HEK293 (cell line): ENCODE measurements at regions of chr17 and their contacts with region 1.

Region 1: DNA sequence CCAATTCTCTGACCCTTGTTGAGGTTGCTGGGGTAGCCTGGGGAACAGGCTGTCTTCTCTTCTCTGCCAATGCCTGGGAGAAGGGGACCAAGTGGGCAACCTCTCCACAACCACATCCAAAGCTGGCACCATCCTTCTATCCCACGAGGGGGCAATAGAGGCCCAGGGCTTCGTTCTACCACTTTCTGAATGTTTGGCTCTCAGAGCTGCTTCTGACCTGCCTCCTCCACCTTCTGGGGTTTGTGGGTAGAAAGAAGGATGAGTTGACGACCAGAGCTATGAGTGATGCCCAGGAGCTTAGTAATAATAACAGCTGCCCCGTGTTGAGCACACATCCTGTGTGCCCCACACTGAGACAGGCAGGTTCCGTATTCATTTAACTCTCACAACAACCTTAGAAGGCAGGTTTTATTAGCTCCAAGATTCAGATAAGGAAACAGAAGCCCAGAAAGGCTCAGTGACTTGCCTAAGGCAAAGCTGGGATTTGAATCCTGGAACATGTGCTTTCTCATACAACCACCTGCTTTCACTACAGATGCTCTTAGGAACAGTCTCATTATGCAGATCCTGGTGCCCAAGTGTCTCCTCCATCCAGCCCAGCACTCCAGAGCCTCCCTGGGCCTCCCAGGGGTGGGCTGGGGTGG is 11.1 kb downstream of the TSPOAP1 start:
- H3K4me3 ChIP-seq: no peak overlapping the region
- H3K27ac ChIP-seq: peak overlapping the region; percentile 43; the same call in 1 of the 2 replicates
- H3K4me1 ChIP-seq: peaks cover 9% of the 10 kb centered on the region
- CTCF ChIP-seq: peak; percentile 81

Region 2: DNA sequence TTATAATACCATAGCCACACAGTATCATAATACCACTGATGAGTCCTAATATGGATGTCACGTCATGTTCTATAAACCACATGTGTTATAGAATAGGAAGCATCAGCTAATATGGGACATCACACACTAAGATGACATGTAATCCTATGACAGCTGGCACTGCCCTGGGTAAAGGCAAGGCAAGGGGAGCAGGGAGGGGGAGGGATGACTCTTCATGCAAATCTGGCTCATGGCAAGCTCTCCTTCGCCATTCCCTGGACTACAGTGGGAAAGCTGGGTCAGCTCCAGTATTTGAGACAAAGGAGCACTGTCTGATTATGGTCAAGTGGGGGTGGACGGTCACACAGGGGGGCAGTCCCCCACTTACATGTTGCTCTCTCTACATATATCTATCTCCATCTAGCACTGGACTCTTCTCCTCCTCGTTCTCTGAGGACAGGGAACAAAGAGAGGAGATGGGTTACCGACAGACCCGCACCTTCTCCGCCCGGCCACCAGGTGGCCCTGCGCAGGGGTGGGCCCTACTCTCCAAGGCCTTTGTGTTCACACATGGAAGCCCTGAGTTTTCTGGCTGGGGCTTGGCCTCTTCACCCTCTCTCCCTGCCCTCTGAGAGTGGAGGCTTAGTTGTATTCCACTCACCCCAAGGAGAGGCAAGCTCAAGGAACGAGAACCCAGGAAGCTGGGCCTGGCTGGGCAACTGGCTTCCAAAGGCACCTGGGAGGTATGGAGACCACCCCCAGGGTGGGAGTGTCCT is 13.4 kb before region 1 on chr17:
- CTCF ChIA-PET with region 1: interaction called, 38 read pairs
- POLR2A ChIA-PET with region 1: interaction called, 3 read pairs
- H3K4me3 ChIP-seq: no peak overlapping the region
- H3K27ac ChIP-seq: no peak overlapping the region
- H3K4me1 ChIP-seq: no peaks in the 10 kb centered on the region
- CTCF ChIP-seq: peak; percentile 69

Region 3: DNA sequence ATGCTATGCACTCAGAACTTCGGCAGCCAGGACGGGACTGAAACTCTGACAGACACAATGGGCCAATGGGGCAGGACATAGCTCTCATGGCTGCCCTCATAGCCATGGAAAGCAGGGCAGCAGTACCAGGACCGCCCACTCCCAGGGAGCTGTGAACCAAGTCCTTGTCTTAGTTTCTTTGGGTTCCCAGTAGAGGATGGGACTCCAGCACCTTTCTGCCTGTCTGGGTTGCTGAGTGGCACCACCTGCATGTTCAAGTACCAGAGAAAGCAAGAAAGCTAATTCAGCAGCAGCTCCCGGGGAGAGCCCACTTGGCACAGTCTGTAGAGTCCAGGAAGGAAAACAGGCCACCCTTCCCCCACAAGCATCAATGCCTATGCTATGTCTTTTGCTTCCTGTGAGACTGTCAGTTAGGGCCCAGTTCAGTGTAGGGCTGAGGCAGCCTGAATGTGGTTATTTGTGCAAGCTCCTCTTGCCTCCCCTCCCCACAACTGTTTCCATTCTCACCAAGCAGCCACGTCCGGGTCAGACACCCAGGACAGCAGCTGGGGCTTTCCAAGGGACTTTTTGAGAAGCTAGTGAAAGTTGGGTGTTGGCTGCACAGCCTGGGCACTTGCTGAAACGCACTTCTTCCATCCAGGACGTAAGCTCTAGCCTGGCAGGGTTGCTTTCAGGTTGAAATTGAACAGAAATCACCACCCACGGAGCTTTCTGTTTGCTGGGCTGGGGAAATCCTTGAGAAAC is 26.7 kb after region 1 on chr17:
- CTCF ChIA-PET with region 1: interaction called, 16 read pairs
- POLR2A ChIA-PET with region 1: interaction called, 11 read pairs
- H3K4me3 ChIP-seq: no peak overlapping the region
- H3K27ac ChIP-seq: no peak overlapping the region
- H3K4me1 ChIP-seq: no peaks in the 10 kb centered on the region
- CTCF ChIP-seq: no peak

Region 4: GRCh38 chr17:58391302-58391984 is 73.9 kb after region 1 on chr17:
- CTCF ChIA-PET with region 1: interaction called, 16 read pairs
- POLR2A ChIA-PET with region 1: no interaction called
- H3K4me3 ChIP-seq: peak overlapping the region; percentile 15
- H3K27ac ChIP-seq: peak overlapping the region; percentile 59
- H3K4me1 ChIP-seq: peaks cover 44% of the 10 kb centered on the region
- CTCF ChIP-seq: no peak

Region 5: DNA sequence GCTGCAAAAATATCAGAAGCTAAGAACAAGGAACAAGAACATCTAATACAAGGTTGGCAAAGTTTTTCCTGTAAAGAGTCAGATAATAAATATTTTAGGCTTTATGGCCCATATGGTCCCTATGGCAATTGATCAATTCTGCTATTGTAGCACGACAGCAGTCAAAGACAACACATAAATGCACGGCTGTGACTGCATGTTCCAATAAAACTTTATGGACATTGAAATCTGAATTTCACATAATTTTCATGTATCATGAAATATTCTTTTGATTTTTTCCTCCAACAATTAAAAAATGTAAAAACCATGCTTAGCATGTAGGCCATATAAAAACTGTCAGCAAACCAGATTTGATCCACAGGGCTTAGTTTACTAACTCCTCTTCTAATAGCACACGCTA is 110.3 kb after region 1 on chr17:
- CTCF ChIA-PET with region 1: interaction called, 19 read pairs
- POLR2A ChIA-PET with region 1: no interaction called
- H3K4me3 ChIP-seq: no peak overlapping the region
- H3K27ac ChIP-seq: no peak overlapping the region
- H3K4me1 ChIP-seq: no peaks in the 10 kb centered on the region
- CTCF ChIP-seq: no peak

Region 6: GRCh38 chr17:58447039-58447975 is 129.8 kb after region 1 on chr17:
- CTCF ChIA-PET with region 1: interaction called, 189 read pairs
- POLR2A ChIA-PET with region 1: interaction called, 3 read pairs
- H3K4me3 ChIP-seq: no peak overlapping the region
- H3K27ac ChIP-seq: no peak overlapping the region
- H3K4me1 ChIP-seq: no peaks in the 10 kb centered on the region
- CTCF ChIP-seq: peak; percentile 93